IMR-90 (cell line): ENCODE measurements at regions of chrX and their contacts with region 1.

Region 1: DNA sequence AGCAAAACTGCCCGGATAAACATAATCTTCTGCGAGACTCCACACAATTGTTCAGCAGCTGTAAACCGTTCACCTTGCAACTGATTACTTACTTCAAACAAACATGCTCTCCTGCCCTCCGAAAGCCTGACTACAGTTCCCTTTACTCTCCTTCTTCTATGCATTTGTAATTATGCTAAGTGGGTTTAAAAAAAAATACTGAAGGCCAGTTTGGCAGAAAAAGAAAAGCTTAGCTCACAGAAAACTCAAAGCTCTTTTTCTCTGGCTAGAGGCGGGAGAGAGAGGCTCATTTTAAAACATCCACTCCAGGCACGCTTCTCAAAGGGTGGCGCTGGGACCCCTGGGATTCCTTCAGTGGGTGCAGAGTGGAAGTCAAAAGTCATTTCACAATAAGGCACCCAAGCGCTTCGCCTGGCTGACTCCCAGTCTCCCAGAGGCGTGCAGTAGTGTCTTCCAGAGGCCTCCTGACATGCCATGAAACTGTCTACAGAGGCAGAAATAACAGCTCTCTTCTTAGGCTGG is 1.9 kb downstream of the DHRSX start:
- DNase-seq: peak; percentile 18
- ATAC-seq: no peak
- H3K4me3 ChIP-seq: peak overlapping the region; percentile 18
- H3K27ac ChIP-seq: peak overlapping the region; percentile 50
- H3K4me1 ChIP-seq: peaks cover 12% of the 10 kb centered on the region
- H3K27me3 ChIP-seq: no peaks in the 10 kb centered on the region
- CTCF ChIP-seq: no peak
- POLR2A ChIP-seq: no peak
- RAD21 ChIP-seq: no peak

Region 2: DNA sequence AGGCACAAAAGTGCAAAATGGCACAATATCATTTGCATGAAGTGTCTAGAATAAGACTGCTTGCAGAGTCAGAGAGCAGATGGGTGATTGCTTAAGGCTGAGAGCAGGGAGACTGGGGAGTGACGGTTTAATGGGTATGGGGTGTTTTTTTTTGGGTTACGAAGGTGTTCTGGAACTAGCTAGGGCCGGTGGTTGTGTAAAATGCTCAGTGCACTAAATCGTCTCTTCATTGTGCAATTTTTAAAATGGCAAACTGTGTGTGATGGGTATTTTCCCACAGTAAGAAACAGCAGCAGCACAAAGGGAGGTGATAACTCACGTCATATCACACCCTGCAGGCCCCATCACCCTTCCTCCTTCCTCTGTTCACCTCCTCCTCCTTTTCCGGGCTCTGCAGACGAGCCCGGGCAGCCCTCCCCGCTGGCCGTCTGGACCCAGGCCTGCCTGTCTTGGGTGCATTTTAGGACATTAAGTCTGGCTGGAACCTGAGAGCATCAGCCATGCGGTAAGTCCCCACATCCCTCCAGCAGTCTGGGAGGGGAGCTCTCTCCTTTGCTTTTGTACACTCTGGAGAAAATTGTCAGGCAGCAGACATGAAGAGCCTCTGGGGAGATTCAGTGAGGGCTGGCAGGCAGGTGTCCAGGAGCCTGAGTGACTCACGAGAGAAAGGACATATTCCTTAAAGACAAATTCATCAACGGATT is 841.3 kb before region 1 on chrX:
- CTCF ChIA-PET with region 1: no interaction called
- POLR2A ChIA-PET with region 1: no interaction called
- dilution Hi-C with region 1: no loop called
- in situ Hi-C with region 1: no loop called
- intact Hi-C with region 1: loop called (anchors 10 kb)
- DNase-seq: no peak
- ATAC-seq: peak; percentile 53
- H3K4me3 ChIP-seq: no peak overlapping the region
- H3K27ac ChIP-seq: no peak overlapping the region
- H3K4me1 ChIP-seq: no peaks in the 10 kb centered on the region
- H3K27me3 ChIP-seq: no peaks in the 10 kb centered on the region
- CTCF ChIP-seq: no peak
- POLR2A ChIP-seq: no peak
- RAD21 ChIP-seq: no peak

Region 3: DNA sequence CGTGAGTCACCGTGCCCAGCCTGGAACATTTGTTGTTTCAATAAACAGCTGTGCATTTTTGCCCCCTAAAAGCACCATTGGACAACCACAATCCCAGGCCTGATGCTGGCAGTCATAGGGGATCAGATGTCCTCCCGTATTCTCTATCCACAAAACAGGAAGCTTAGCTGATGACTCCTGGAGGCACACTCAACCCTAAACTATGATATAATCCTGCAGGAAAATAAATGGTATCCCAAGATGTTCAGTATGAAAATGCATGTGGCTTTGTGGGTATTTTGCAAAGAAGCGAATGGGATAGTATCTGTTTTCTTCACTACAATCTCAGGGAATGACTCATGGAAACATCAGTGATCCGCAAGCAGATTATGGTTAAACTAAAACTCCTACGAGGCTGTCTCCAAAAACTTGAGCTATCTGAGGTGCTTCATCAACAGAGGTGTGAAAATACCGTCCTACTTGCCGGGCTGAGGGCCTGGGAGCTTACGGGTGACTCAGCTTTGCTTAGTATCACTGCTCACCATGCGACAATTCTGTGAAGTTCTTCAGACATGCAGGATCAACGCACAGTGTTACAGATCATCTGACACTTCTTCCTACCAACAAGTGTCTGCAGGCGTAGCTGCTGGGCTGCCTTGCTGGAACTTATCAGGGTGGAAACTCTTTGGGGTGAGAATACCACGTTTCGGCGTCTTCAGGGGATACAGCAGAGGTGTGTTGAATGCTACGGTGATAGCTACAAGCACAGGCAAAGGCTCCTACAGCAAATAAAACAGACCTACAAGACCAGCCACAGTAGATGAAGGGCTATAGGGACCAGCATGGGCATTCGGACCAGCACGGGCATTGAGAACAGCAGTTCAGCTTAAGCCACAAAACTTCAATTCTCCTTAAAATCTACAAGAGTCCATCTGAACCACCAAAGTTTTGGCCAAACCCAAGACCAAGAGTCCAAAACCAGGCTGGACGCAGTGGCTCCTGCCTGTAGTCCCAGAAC is 146.5 kb before region 1 on chrX:
- CTCF ChIA-PET with region 1: no interaction called
- POLR2A ChIA-PET with region 1: no interaction called
- dilution Hi-C with region 1: no loop called
- in situ Hi-C with region 1: no loop called
- intact Hi-C with region 1: loop called (anchors 5 kb)
- DNase-seq: peak; percentile 99
- ATAC-seq: peak; percentile 93
- H3K4me3 ChIP-seq: no peak overlapping the region
- H3K27ac ChIP-seq: peak overlapping the region; percentile 87
- H3K4me1 ChIP-seq: peaks cover 14% of the 10 kb centered on the region
- H3K27me3 ChIP-seq: no peaks in the 10 kb centered on the region
- CTCF ChIP-seq: 0 out of 2 replicates have a peak, but pooled peaks have one; percentile 2
- POLR2A ChIP-seq: no peak
- RAD21 ChIP-seq: peak; percentile 20

Region 4: GRCh38 chrX:2484721-2485648 is 13.9 kb before region 1 on chrX:
- CTCF ChIA-PET with region 1: no interaction called
- POLR2A ChIA-PET with region 1: no interaction called
- dilution Hi-C with region 1: no loop called
- in situ Hi-C with region 1: no loop called
- intact Hi-C with region 1: loop called (anchors 2 kb)
- DNase-seq: peak; percentile 54
- ATAC-seq: peak; percentile 80
- H3K4me3 ChIP-seq: peak overlapping the region; percentile 8; the same call in 1 of the 2 replicates
- H3K27ac ChIP-seq: peak overlapping the region; percentile 64
- H3K4me1 ChIP-seq: peaks cover 14% of the 10 kb centered on the region
- H3K27me3 ChIP-seq: no peaks in the 10 kb centered on the region
- CTCF ChIP-seq: no peak
- POLR2A ChIP-seq: no peak
- RAD21 ChIP-seq: no peak